Ovary (tissue), 10 donors: ENCODE measurements at regions of chr6 and their contacts with region 1.

Region 1: GRCh38 chr6:97186416-97186999 is 96.5 kb downstream of the MMS22L start:
- DNase-seq: peak; percentile 21 to 56 (median 47)
- H3K4me3 ChIP-seq: no peak overlapping the region
- H3K27ac ChIP-seq: no peak overlapping the region
- H3K4me1 ChIP-seq: no peaks in the 10 kb centered on the region
- H3K27me3 ChIP-seq: no peaks in the 10 kb centered on the region
- CTCF ChIP-seq: peak in 2 of 3 donors; percentile 15 to 23
- EP300 ChIP-seq: no peak
- POLR2A ChIP-seq: no peak

Region 2: GRCh38 chr6:97394160-97394748 is 207.7 kb after region 1 on chr6:
- intact Hi-C with region 1: loop called in 1 of 4 experiments (anchors 10 kb)
- DNase-seq: no peak
- H3K4me3 ChIP-seq: no peak overlapping the region
- H3K27ac ChIP-seq: no peak overlapping the region
- H3K4me1 ChIP-seq: no peaks in the 10 kb centered on the region
- H3K27me3 ChIP-seq: no peaks in the 10 kb centered on the region
- CTCF ChIP-seq: no peak
- EP300 ChIP-seq: no peak
- POLR2A ChIP-seq: no peak

Region 3: DNA sequence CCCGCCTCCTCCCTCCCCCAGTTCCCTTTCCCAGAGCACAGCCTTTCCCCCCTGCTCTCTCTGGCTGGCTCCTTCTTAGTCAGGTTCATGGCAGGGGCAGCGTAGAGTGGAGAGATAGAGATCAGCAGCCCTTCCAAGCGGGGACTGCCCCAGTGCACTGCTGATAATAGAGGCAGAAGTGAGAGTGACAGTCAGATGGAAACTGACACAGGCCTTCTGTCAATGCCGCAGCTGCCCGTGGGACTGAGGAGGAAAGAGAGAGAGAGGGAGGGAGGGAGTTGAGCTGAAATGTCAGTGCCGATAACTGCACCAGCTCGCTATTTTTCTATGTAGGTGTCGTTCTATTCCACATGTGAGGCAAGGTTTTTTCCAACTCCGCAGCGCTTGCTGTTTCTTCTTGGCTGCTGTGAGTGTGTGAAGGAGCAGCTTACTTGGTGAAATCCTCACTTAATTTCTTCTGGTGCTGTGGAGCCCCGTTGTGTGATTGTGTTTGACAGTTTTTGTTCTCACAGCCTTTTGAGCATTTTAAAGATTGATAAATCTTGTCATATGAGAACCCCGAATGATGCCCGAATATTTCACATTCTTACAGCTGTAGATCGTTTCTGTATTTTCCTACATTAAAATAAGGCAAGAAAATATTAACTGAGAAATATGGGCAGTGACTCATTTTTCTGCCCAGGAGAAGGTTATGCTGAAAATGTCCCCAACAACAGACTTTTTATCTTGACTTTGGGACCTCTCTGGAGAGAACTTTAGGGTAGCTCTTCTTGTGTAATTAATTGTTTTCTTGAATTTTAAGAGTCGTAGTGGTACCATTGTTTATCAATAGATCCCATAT is 482.9 kb after region 1 on chr6:
- intact Hi-C with region 1: no loop called
- DNase-seq: no peak
- H3K4me3 ChIP-seq: no peak overlapping the region
- H3K27ac ChIP-seq: no peak overlapping the region
- H3K4me1 ChIP-seq: no peaks in the 10 kb centered on the region
- H3K27me3 ChIP-seq: no peaks in the 10 kb centered on the region
- CTCF ChIP-seq: no peak
- EP300 ChIP-seq: no peak
- POLR2A ChIP-seq: no peak